A549 (cell line): ENCODE measurements at regions of chr1 and their contacts with region 1.

Region 1: GRCh38 chr1:229514578-229515275 is 6.6 kb upstream of the NUP133 start:
- DNase-seq: peak; percentile 64 to 75
- ATAC-seq: peak; percentile 99
- H3K4me3 ChIP-seq: no peak overlapping the region
- H3K27ac ChIP-seq: no peak overlapping the region
- H3K4me1 ChIP-seq: no peaks in the 10 kb centered on the region
- CTCF ChIP-seq: peak; percentile 73
- EP300 ChIP-seq: no peak
- POLR2A ChIP-seq: no peak
- RAD21 ChIP-seq: peak; percentile 61 to 69

Region 2: DNA sequence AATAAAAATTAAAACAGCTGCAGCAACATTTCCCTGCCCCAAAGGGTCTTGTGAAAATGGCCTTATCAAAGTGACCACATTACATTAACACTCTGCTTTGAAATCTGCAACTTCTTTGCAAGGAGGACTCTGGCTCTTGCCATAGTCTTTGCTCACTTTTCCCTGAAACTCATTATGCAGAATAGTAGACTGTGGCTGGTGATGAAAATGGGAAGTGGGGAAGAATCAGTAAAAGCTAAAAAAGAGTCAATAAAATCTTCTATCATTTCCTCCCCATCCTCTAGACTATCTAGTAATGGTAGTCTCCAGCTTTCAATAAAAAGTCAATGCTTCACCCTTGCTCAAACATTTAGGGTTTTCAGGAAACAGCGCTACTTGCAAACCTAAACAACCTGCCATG is 12.0 kb after region 1 on chr1:
- CTCF ChIA-PET with region 1: interaction called, 18 read pairs
- POLR2A ChIA-PET with region 1: no interaction called
- DNase-seq: no peak
- ATAC-seq: no peak
- H3K4me3 ChIP-seq: no peak overlapping the region
- H3K27ac ChIP-seq: no peak overlapping the region
- H3K4me1 ChIP-seq: no peaks in the 10 kb centered on the region
- CTCF ChIP-seq: no peak
- EP300 ChIP-seq: no peak
- POLR2A ChIP-seq: no peak
- RAD21 ChIP-seq: no peak